ENCODE measurements at regions of chr2 and their contacts with region 1.

Region 1: GRCh38 chr2:26144953-26145680 is 27.8 kb upstream of the GAREM2 start:
- DNase-seq: peak in 1 of 2 donors; percentile 68
- H3K4me3 ChIP-seq: no peak overlapping the region
- H3K27ac ChIP-seq: no peak overlapping the region
- H3K4me1 ChIP-seq: no peaks in the 10 kb centered on the region
- H3K27me3 ChIP-seq: no peaks in the 10 kb centered on the region
- CTCF ChIP-seq: peak; percentile 61 to 75 (median 74)

Region 2: GRCh38 chr2:25851740-25852503 is 293.2 kb before region 1 on chr2:
- intact Hi-C with region 1: loop called (anchors 10 kb)
- DNase-seq: no peak
- H3K4me3 ChIP-seq: peak overlapping the region in 1 of 2 donors; percentile 39
- H3K27ac ChIP-seq: peak overlapping the region; percentile 7 to 46
- H3K4me1 ChIP-seq: peaks cover 0 to 11% of the 10 kb centered on the region in 2 donors
- H3K27me3 ChIP-seq: no peaks in the 10 kb centered on the region
- CTCF ChIP-seq: peak; percentile 63 to 65 (median 65)

Region 3: GRCh38 chr2:25991965-25992364 is 153.2 kb before region 1 on chr2:
- intact Hi-C with region 1: loop called (anchors 1 kb)
- DNase-seq: no peak
- H3K4me3 ChIP-seq: no peak overlapping the region
- H3K27ac ChIP-seq: no peak overlapping the region
- H3K4me1 ChIP-seq: peaks cover 0 to 3% of the 10 kb centered on the region in 2 donors
- H3K27me3 ChIP-seq: no peaks in the 10 kb centered on the region
- CTCF ChIP-seq: no peak

Region 4: DNA sequence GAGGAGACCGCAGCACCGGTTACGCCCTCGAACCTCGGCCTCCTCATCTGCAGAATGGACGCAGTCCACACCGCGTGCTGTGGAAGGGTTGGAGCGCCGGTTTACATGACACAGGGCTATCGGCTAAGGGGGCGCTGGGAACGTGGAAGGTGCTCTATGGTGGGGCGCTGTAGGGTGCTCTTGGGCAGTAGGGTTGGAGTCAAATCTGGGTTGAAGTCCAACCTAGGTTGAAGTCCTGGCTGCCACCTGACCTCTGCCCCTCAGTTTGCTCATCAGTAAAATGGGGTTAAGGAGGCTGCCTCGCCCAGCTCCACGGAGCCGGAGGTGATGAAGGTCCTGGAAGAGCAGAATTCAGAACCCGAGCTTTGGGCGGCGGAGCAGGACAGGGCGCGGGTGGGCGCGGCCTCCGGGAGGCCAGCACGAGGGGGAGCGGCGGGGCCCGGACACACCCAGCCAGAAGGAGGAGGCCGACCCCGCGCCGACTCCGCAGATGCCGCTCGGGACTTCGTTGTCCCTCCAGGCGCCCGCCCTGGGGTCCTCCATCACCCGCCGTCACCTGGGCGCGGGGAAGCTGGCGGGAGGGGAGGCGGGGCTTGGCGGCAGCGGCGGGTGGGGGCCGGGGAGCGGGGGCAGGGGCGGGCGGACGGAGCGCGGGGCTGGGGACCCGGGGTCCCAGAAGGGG is 27.2 kb after region 1 on chr2:
- intact Hi-C with region 1: no loop called
- DNase-seq: peak in 1 of 2 donors; percentile 58
- H3K4me3 ChIP-seq: peak overlapping the region; percentile 57 to 59
- H3K27ac ChIP-seq: no peak overlapping the region
- H3K4me1 ChIP-seq: peaks cover 4% of the 10 kb centered on the region in 2 donors
- H3K27me3 ChIP-seq: peaks cover 15% of the 10 kb centered on the region
- CTCF ChIP-seq: no peak